Right ventricle myocardium inferior (tissue), 1 donor: ENCODE measurements at regions of chr3 and their contacts with region 1.

Region 1: GRCh38 chr3:4091786-4092185 is 211.4 kb upstream of the SETMAR start:
- DNase-seq: no peak
- ATAC-seq: no peak

Region 2: GRCh38 chr3:3552761-3553160 is 539.0 kb before region 1 on chr3:
- intact Hi-C with region 1: loop called (anchors 10 kb)
- DNase-seq: no peak
- ATAC-seq: no peak